ENCODE measurements at regions of chr1 and their contacts with region 1.

Region 1: DNA sequence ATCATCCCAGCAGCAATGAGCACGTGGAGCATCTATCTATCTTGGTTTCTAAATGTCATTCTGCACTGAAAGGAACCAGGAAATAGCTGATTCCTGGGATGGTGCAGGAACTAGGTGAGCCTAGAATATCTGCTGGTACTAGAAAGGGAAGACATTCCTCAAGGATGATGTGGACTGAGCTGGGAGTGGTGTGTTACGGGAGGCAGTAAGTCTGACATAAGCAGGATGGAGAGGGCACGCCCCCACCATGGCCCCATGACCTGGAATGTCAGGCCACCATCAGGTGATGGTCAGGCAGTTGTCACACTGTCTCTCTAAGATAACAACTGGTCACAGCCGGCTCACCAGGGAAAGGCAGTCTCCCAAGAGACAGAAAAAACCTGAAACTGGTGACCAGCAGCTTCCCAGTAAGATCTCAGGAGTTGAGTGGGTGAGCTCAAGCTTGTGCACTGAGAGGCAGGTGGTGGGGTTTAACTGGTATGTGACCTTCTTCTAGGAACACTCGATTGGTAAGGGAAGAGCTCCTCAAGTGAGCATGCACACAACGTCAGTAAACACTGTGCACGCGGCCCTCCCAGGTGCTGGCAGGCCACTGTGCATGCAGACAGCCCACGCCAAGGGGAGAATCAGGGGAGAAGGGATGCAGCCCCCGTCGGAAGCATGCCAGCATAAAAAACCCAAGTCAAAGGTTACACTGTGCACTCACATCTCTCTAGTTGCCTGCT is 148.7 kb downstream of the ADSS2 start:
- DNase-seq: no peak
- ATAC-seq: no peak
- H3K4me3 ChIP-seq: no peak overlapping the region
- H3K27ac ChIP-seq: no peak overlapping the region
- H3K4me1 ChIP-seq: no peaks in the 10 kb centered on the region
- H3K27me3 ChIP-seq: no peaks in the 10 kb centered on the region

Region 2: DNA sequence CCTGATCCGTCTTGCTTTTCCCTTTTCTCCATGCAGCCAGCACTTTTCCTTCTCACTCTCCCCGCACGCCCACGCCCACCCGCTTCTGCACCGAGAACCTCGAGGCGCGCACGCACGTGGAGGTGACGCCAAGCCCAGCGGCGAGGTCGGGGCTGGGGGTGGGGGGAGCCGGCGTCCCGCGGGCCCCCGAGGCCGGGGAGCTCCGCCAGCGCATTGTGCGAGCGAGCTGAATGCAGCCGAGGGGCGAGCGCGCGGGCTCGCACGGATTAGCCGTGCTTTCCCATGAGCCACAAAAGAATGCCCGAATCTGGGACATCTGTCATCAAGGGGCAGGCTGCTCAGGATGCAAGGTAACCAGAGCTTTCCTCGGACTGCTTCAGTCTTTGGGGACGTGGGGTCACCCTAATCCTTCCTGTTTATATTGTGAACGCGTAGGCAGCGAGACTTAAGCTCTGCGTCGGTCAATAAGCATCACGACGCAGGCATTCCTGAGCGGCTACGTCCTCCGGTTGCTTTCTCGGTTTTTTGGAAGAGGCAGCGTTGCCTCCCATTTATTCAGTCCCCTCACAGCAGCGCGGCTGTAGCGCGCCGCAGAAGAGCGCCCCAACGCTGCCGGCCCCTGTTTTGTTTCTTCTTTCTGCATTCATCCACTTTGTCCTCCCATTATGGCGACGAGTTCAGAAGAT is 385.7 kb before region 1 on chr1:
- intact Hi-C with region 1: no loop called
- DNase-seq: peak in 1 of 2 donors; percentile 81
- ATAC-seq: peak; percentile 65
- H3K4me3 ChIP-seq: peak overlapping the region; percentile 68 to 71
- H3K27ac ChIP-seq: no peak overlapping the region
- H3K4me1 ChIP-seq: no peaks in the 10 kb centered on the region
- H3K27me3 ChIP-seq: no peaks in the 10 kb centered on the region

Region 3: DNA sequence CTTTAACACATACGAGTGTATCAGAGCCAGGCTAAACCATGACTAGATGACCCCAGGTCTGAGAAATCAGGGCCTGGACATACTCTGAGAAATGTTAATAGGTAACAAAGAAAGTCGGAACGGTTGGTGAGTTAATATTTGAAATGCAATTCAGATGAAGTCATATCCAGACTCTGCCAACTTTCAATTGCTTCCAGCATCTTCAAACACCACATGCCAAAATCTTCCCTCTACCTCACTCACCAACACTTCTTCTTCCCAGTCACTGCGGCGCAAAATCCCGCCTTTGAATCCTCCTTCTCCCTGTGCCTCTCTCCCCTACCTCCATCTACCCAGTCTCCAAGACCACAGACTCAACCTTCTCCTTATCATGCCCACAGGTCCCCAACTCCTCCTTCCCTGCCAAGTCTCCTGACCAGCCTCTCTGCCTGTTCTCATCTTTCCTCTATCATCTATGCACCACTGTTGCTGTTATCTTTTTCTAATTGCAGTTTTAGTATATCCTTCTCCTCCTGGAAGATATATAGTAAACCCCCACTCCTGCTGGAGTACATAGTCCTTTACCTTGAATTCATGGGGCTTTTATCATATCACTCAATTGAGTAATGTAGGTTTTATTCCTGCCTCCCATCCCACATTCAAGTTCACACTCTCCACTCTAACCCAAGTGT is 210.6 kb before region 1 on chr1:
- intact Hi-C with region 1: no loop called
- DNase-seq: no peak
- ATAC-seq: no peak
- H3K4me3 ChIP-seq: no peak overlapping the region
- H3K27ac ChIP-seq: no peak overlapping the region
- H3K4me1 ChIP-seq: no peaks in the 10 kb centered on the region
- H3K27me3 ChIP-seq: peaks cover 0 to 1% of the 10 kb centered on the region in 2 donors

Region 4: GRCh38 chr1:244445320-244446181 is 142.5 kb after region 1 on chr1:
- intact Hi-C with region 1: loop called in 1 of 2 experiments (anchors 10 kb)
- DNase-seq: no peak
- ATAC-seq: peak; percentile 29
- H3K4me3 ChIP-seq: no peak overlapping the region
- H3K27ac ChIP-seq: peak overlapping the region; percentile 94 to 95
- H3K4me1 ChIP-seq: peaks cover 5 to 11% of the 10 kb centered on the region in 2 donors
- H3K27me3 ChIP-seq: no peaks in the 10 kb centered on the region